H1 (cell line): ENCODE measurements at regions of chr2 and their contacts with region 1.

Region 1: GRCh38 chr2:85538486-85539360 is at the start of gene MAT2A:
- DNase-seq: peak; percentile 84 to 99
- H3K4me3 ChIP-seq: peak within 1 kb of the TSS; percentile 87 to 100 (median 98)
- H3K27ac ChIP-seq: peak within 1 kb of the TSS; percentile 100
- H3K4me1 ChIP-seq: peaks cover 2 to 7% (median 5%) of the 10 kb centered on the region in 4 experiments; a peak in 4 of 7 replicates
- H3K27me3 ChIP-seq: no peaks in the 10 kb centered on the region
- CTCF ChIP-seq: peak; percentile 70 to 87 (median 76)
- EP300 ChIP-seq: peak in 1 of 2 experiments; percentile 95; a peak in 2 of 3 replicates
- POLR2A ChIP-seq: peak; percentile 99
- RAD21 ChIP-seq: peak; percentile 47 to 63; a peak in 3 of 4 replicates
- total RNA-seq, gene MAT2A: 297 and 307 TPM in 2 replicates

Region 2: GRCh38 chr2:85390941-85391669 is 147.6 kb before region 1 on chr2:
- CTCF ChIA-PET with region 1: interaction called, 4 read pairs
- POLR2A ChIA-PET with region 1: interaction called, 396 read pairs
- DNase-seq: peak; percentile 36 to 97
- H3K4me3 ChIP-seq: no peak overlapping the region
- H3K27ac ChIP-seq: no peak overlapping the region
- H3K4me1 ChIP-seq: peaks cover 0 to 6% (median 3%) of the 10 kb centered on the region in 4 experiments; a peak in 4 of 7 replicates
- H3K27me3 ChIP-seq: no peaks in the 10 kb centered on the region; a peak in 1 of 7 replicates
- CTCF ChIP-seq: peak; percentile 89 to 94 (median 94)
- EP300 ChIP-seq: no peak
- POLR2A ChIP-seq: no peak
- RAD21 ChIP-seq: peak; percentile 95 to 97

Region 3: DNA sequence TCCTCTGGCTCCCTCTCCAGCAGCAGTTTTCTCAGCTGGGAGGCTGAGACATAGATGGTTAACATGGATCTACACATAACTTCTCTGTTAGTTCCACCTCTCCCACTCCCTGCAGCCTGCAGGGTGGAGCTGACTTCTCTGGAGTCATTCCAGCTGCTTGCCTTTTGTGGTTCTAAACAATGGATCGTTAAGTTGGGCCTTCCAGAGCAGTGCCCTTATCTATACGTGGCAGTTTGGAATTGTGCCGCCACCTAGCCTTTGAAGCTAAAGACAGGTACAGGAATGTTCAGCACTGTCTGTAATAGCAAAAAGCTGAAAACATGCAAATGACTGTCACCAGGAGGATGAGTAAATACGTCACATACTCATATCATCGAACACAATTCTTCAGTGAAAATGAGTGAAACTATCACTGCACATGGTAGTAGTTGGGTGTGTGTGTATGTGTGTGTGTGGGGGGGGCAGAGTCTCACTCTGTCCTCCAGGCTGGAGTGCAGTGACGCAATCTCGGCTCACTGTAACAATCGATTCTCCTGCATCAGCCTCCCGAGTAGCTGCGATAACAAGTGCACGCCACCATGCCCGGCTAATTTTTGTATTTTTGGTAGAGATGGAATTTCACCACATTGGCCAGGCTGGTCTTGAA is 69.9 kb before region 1 on chr2:
- CTCF ChIA-PET with region 1: interaction called, 4 read pairs
- POLR2A ChIA-PET with region 1: interaction called, 51 read pairs
- DNase-seq: peak in 1 of 2 experiments; percentile 21
- H3K4me3 ChIP-seq: no peak overlapping the region
- H3K27ac ChIP-seq: no peak overlapping the region
- H3K4me1 ChIP-seq: peaks cover 0 to 8% (median 5%) of the 10 kb centered on the region in 4 experiments; a peak in 5 of 7 replicates
- H3K27me3 ChIP-seq: no peaks in the 10 kb centered on the region; a peak in 1 of 7 replicates
- CTCF ChIP-seq: no peak
- EP300 ChIP-seq: no peak
- POLR2A ChIP-seq: no peak
- RAD21 ChIP-seq: no peak; a peak in 1 of 4 replicates

Region 4: GRCh38 chr2:85490861-85491755 is 47.6 kb before region 1 on chr2:
- CTCF ChIA-PET with region 1: no interaction called
- POLR2A ChIA-PET with region 1: interaction called, 11 read pairs
- DNase-seq: no peak
- H3K4me3 ChIP-seq: no peak overlapping the region
- H3K27ac ChIP-seq: no peak overlapping the region
- H3K4me1 ChIP-seq: no peaks in the 10 kb centered on the region
- H3K27me3 ChIP-seq: no peaks in the 10 kb centered on the region
- CTCF ChIP-seq: no peak
- EP300 ChIP-seq: no peak
- POLR2A ChIP-seq: no peak
- RAD21 ChIP-seq: no peak

Region 5: DNA sequence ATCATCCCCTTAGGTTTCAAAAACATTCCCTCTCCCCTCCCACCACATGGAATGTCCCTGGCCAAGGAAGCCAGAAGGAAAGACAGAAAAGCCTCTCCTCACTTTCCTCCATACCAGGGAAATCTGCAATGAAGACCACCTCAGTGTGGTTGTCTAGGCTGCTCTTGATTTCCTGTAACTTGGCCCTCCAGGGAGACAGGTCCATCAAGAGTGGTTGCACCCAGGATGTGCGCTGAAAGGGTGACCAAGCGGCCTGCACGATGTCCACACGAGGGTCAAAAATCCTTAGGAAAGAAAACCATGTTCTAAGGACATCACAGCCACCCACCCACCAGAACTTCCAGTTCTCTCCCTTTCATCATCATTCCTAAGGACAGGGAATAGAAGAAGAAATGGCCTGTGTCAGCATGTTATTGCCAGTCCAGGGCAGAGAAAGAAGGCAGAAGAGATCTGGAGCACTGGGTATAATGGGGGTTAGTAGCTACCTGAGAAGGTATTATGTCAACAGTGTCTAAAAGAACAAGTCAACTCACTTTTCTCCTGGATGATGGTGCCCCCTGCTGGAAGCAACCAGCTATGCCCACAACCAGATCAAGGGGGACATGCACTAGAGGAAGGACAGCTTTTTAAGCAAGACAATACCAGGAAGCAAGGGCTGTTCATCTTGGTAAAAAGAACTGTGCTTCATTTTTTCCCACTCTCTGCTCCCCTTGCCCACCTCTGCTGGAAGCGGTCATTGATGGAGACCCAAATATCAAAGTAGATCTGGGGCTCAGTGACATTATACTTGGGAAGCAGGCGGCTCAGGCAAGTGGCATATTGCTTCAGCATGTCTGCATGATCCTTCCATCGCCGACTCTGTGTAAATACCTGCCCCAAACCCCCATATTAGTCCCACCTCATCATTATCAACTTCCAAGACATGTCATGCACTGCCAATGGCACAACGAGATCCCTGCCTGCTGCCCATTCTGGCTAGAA is 13.3 kb after region 1 on chr2:
- CTCF ChIA-PET with region 1: interaction called, 67 read pairs
- POLR2A ChIA-PET with region 1: interaction called, 803 read pairs
- DNase-seq: peak; percentile 60 to 93
- H3K4me3 ChIP-seq: no peak overlapping the region
- H3K27ac ChIP-seq: no peak overlapping the region
- H3K4me1 ChIP-seq: no peaks in the 10 kb centered on the region
- H3K27me3 ChIP-seq: no peaks in the 10 kb centered on the region
- CTCF ChIP-seq: peak; percentile 70 to 93 (median 93)
- EP300 ChIP-seq: no peak
- POLR2A ChIP-seq: no peak
- RAD21 ChIP-seq: peak; percentile 98

Region 6: GRCh38 chr2:85602476-85603234 is 63.9 kb after region 1 on chr2 and contains the start of gene TMEM150A:
- CTCF ChIA-PET with region 1: no interaction called
- POLR2A ChIA-PET with region 1: interaction called, 68 read pairs
- DNase-seq: peak; percentile 54 to 91
- H3K4me3 ChIP-seq: peak within 1 kb of the TSS; percentile 62 to 89 (median 82)
- H3K27ac ChIP-seq: peak within 1 kb of the TSS; percentile 20; the same call in 1 of the 2 replicates
- H3K4me1 ChIP-seq: peaks cover 0 to 5% (median 2%) of the 10 kb centered on the region in 4 experiments; a peak in 5 of 7 replicates
- H3K27me3 ChIP-seq: no peaks in the 10 kb centered on the region
- CTCF ChIP-seq: peak; percentile 11 to 23 (median 14); a peak in 3 of 4 replicates
- EP300 ChIP-seq: no peak
- POLR2A ChIP-seq: peak; percentile 19 to 51
- RAD21 ChIP-seq: peak in 1 of 2 experiments; percentile 7; a peak in 1 of 4 replicates
- total RNA-seq, gene TMEM150A: 19.8 and 22.4 TPM in 2 replicates